ENCODE measurements at regions of chr2 and their contacts with region 1.

Region 1: DNA sequence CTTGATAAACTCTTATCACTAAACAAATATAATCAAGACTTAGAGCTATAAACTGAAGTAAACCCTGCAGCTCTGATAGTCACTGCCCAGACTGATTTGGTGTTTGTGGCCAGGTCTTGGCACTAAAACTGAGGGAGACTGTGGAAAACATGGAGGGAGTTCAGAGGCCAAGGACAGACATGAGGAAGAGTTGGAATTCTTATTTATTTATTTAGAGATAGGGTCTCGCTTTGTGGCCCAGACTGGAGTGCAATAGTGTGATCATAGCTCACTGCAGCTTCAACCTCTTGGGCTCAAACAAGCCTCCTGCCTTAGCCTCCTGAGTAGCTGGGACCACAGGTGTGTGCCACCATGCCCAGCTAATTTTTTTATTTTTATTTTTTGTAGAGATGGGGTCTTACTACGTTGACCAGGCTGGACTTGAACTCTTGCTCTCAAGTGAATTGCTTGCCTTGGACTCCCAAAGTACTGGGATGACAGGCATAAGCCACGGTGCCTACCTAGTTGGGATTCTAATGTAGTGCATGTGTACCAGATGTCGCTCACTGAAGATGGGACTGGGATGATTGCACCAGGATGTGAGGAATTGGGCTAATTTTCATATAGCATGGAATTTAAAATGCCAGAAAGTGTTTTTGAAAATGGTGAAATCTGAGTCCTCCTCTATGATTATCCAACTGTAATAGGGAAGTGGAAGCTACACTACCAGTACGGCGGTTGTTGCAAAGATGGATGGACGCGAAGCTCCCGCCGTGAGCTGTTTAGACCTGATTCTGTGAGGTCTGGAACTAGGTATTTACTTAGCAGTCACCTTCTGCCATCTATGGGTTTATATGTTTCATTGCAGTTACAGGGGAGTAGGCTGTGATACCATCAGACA is 52.7 kb upstream of the CTLA4 start:
- H3K4me3 ChIP-seq: no peak overlapping the region
- H3K27ac ChIP-seq: no peak overlapping the region
- H3K4me1 ChIP-seq: no peaks in the 10 kb centered on the region
- CTCF ChIP-seq: peak; percentile 60; the same call in 1 of the 2 replicates

Region 2: GRCh38 chr2:203797712-203798111 is 17.2 kb before region 1 on chr2:
- CTCF ChIA-PET with region 1: no interaction called
- POLR2A ChIA-PET with region 1: no interaction called
- H3K4me3 ChIP-seq: no peak overlapping the region
- H3K27ac ChIP-seq: no peak overlapping the region
- H3K4me1 ChIP-seq: no peaks in the 10 kb centered on the region
- CTCF ChIP-seq: no peak

Region 3: GRCh38 chr2:203826704-203827103 is 11.8 kb after region 1 on chr2:
- CTCF ChIA-PET with region 1: interaction called, 11 read pairs
- POLR2A ChIA-PET with region 1: no interaction called
- H3K4me3 ChIP-seq: no peak overlapping the region
- H3K27ac ChIP-seq: no peak overlapping the region
- H3K4me1 ChIP-seq: no peaks in the 10 kb centered on the region
- CTCF ChIP-seq: no peak

Region 4: DNA sequence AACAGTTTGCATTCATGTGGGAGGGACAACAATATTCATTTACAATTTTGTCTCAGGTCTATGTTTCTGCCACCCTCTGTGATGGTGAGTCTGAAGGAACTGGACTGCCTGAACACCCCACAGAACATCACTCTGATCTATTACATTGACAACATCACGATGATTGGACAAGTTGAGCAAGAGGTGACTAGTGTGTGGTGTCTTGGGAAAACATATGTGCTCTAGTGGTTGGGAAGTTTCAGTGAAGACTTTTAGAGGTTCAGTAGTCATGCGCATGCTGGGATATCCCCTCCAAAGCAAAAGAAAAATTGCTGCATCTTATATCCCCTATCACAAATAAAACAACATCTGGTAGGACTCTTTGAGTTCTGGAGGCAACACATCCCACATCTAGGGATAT is 34.1 kb after region 1 on chr2:
- CTCF ChIA-PET with region 1: no interaction called
- POLR2A ChIA-PET with region 1: no interaction called
- H3K4me3 ChIP-seq: no peak overlapping the region
- H3K27ac ChIP-seq: no peak overlapping the region
- H3K4me1 ChIP-seq: no peaks in the 10 kb centered on the region
- CTCF ChIP-seq: no peak

Region 5: DNA sequence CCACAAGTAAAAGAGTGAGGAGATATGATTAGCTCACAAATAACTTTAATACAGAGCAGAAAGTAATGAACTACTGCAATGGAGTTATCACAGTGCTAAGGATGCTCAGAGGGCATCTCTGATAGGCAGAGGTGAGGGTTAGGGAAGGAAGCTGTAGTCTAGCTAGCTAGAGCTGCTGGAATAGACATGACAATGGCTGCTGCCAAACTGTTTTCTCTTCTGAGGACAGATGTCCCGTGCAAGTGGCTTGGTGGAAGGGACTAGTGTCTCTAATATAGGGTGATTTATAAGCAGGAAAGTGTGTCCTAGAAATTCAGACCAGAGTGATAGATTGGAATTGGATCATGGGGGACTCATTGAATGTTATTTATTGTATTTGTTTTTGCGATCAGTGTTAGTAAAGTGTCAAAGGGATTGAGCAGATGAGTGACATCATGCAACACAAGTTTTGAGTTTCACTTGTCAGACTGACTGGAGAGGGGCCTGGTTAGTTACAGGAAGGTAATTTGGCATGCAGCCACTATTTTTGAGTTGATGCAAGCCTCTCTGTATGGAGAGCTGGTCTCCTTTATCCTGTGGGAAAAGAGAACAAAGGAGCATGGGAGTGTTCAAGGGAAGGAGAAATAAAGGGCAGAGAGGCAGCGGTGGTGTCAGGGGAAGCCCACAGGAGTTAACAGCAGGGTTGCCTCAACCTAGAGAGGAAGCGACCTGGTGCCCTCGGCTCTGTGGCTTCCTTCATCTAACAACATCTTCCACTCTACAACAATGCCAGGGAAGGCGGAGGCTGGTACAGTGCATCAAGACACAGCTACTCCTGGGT is 54.5 kb after region 1 on chr2:
- CTCF ChIA-PET with region 1: no interaction called
- POLR2A ChIA-PET with region 1: no interaction called
- H3K4me3 ChIP-seq: no peak overlapping the region
- H3K27ac ChIP-seq: no peak overlapping the region
- H3K4me1 ChIP-seq: no peaks in the 10 kb centered on the region
- CTCF ChIP-seq: no peak

Region 6: GRCh38 chr2:203909261-203909967 is 94.5 kb after region 1 on chr2:
- CTCF ChIA-PET with region 1: interaction called, 13 read pairs
- POLR2A ChIA-PET with region 1: no interaction called
- H3K4me3 ChIP-seq: no peak overlapping the region
- H3K27ac ChIP-seq: no peak overlapping the region
- H3K4me1 ChIP-seq: no peaks in the 10 kb centered on the region
- CTCF ChIP-seq: no peak